Activated B cell treated with CpG ODN at 0.5 μM for 24 hours (primary cell): ENCODE measurements at regions of chr3 and their contacts with region 1.

Region 1: GRCh38 chr3:158672293-158673176 is at the start of gene LXN:
- DNase-seq: peak; percentile 54
- ATAC-seq: peak; percentile 98
- H3K4me3 Mint-ChIP-seq: peak within 1 kb of the TSS; percentile 94
- H3K27ac Mint-ChIP-seq: peak within 1 kb of the TSS; percentile 86
- H3K4me1 Mint-ChIP-seq: peaks cover 21% of the 10 kb centered on the region
- H3K27me3 Mint-ChIP-seq: no peaks in the 10 kb centered on the region
- CTCF ChIP-seq: no peak
- total RNA-seq, gene LXN: 5.2 and 5.9 TPM in 2 replicates

Region 2: GRCh38 chr3:158659454-158660237 is 12.9 kb before region 1 on chr3:
- CTCF ChIA-PET with region 1: interaction called, 3 read pairs
- POLR2A ChIA-PET with region 1: no interaction called
- intact Hi-C with region 1: loop called (anchors 2 kb)
- DNase-seq: no peak
- ATAC-seq: peak; percentile 62
- H3K4me3 Mint-ChIP-seq: no peak overlapping the region
- H3K27ac Mint-ChIP-seq: no peak overlapping the region
- H3K4me1 Mint-ChIP-seq: no peaks in the 10 kb centered on the region
- H3K27me3 Mint-ChIP-seq: no peaks in the 10 kb centered on the region
- CTCF ChIP-seq: peak; percentile 17